Naive thymus-derived CD4-positive, alpha-beta T cell (primary cell): ENCODE measurements at regions of chr6 and their contacts with region 1.

Region 1: GRCh38 chr6:52284460-52285176 is at the start of gene MCM3:
- DNase-seq: peak; percentile 76 to 98 (median 97)
- ATAC-seq: peak; percentile 98
- H3K4me3 ChIP-seq: peak within 1 kb of the TSS; percentile 77
- H3K4me3 Mint-ChIP-seq: peak within 1 kb of the TSS in 4 of 10 donors; percentile 42 to 89 (median 58)
- H3K27ac ChIP-seq: peak within 1 kb of the TSS; percentile 74
- H3K27ac Mint-ChIP-seq: peak within 1 kb of the TSS in 6 of 9 donors; percentile 28 to 77 (median 30)
- H3K4me1 ChIP-seq: peaks cover 32 to 33% of the 10 kb centered on the region in 2 donors
- H3K4me1 Mint-ChIP-seq: peaks cover 22 to 58% (median 48%) of the 10 kb centered on the region in 7 donors
- H3K27me3 ChIP-seq: no peaks in the 10 kb centered on the region
- H3K27me3 Mint-ChIP-seq: no peaks in the 10 kb centered on the region
- total RNA-seq, gene MCM3: 20.3 to 157 (median 45.2) TPM

Region 2: GRCh38 chr6:52304983-52305390 is 20.4 kb after region 1 on chr6:
- CTCF ChIA-PET with region 1: interaction called, 46 read pairs
- POLR2A ChIA-PET with region 1: interaction called, 16 read pairs
- intact Hi-C with region 1: loop called (anchors 1 kb)
- DNase-seq: peak in 1 of 9 donors; percentile 5
- ATAC-seq: peak; percentile 62
- H3K4me3 ChIP-seq: peak overlapping the region; percentile 20
- H3K4me3 Mint-ChIP-seq: peak overlapping the region; percentile 38 to 84 (median 74)
- H3K27ac ChIP-seq: peak overlapping the region; percentile 64
- H3K27ac Mint-ChIP-seq: peak overlapping the region; percentile 68 to 98 (median 96)
- H3K4me1 ChIP-seq: peaks cover 53 to 69% of the 10 kb centered on the region in 2 donors
- H3K4me1 Mint-ChIP-seq: peaks cover 47 to 88% (median 78%) of the 10 kb centered on the region in 7 donors
- H3K27me3 ChIP-seq: no peaks in the 10 kb centered on the region
- H3K27me3 Mint-ChIP-seq: no peaks in the 10 kb centered on the region

Region 3: GRCh38 chr6:52377538-52378221 is 93.1 kb after region 1 on chr6:
- CTCF ChIA-PET with region 1: interaction called, 6 read pairs
- POLR2A ChIA-PET with region 1: interaction called, 15 read pairs
- intact Hi-C with region 1: no loop called
- DNase-seq: peak in 3 of 9 donors; percentile 34 to 50 (median 36)
- ATAC-seq: peak; percentile 29
- H3K4me3 ChIP-seq: no peak overlapping the region
- H3K4me3 Mint-ChIP-seq: peak overlapping the region; percentile 22 to 87 (median 63)
- H3K27ac ChIP-seq: peak overlapping the region; percentile 52
- H3K27ac Mint-ChIP-seq: peak overlapping the region; percentile 51 to 96 (median 87)
- H3K4me1 ChIP-seq: peaks cover 10 to 54% of the 10 kb centered on the region in 2 donors
- H3K4me1 Mint-ChIP-seq: peaks cover 50 to 86% (median 82%) of the 10 kb centered on the region in 7 donors
- H3K27me3 ChIP-seq: no peaks in the 10 kb centered on the region
- H3K27me3 Mint-ChIP-seq: no peaks in the 10 kb centered on the region

Region 4: GRCh38 chr6:52419809-52420670 is 135.4 kb after region 1 on chr6 and contains the start of gene EFHC1:
- CTCF ChIA-PET with region 1: interaction called, 45 read pairs
- POLR2A ChIA-PET with region 1: interaction called, 36 read pairs
- intact Hi-C with region 1: loop called (anchors 1 kb)
- DNase-seq: peak; percentile 95 to 98 (median 97)
- ATAC-seq: peak; percentile 97
- H3K4me3 ChIP-seq: peak within 1 kb of the TSS; percentile 73
- H3K4me3 Mint-ChIP-seq: no peak within 1 kb of the TSS
- H3K27ac ChIP-seq: peak within 1 kb of the TSS; percentile 72
- H3K27ac Mint-ChIP-seq: peak within 1 kb of the TSS in 1 of 9 donors; percentile 96
- H3K4me1 ChIP-seq: peaks cover 13 to 19% of the 10 kb centered on the region in 2 donors
- H3K4me1 Mint-ChIP-seq: peaks cover 10 to 31% (median 24%) of the 10 kb centered on the region in 7 donors
- H3K27me3 ChIP-seq: no peaks in the 10 kb centered on the region
- H3K27me3 Mint-ChIP-seq: peaks cover 0 to 5% (median 0%) of the 10 kb centered on the region in 5 donors
- total RNA-seq, gene EFHC1: 2.4 to 13.8 (median 6.0) TPM

Region 5: GRCh38 chr6:52491203-52492069 is 206.8 kb after region 1 on chr6:
- CTCF ChIA-PET with region 1: no interaction called
- POLR2A ChIA-PET with region 1: no interaction called
- intact Hi-C with region 1: no loop called
- DNase-seq: no peak
- ATAC-seq: no peak
- H3K4me3 ChIP-seq: no peak overlapping the region
- H3K4me3 Mint-ChIP-seq: no peak overlapping the region
- H3K27ac ChIP-seq: no peak overlapping the region
- H3K27ac Mint-ChIP-seq: no peak overlapping the region
- H3K4me1 ChIP-seq: no peaks in the 10 kb centered on the region
- H3K4me1 Mint-ChIP-seq: peaks cover 0 to 37% (median 0%) of the 10 kb centered on the region in 7 donors
- H3K27me3 ChIP-seq: no peaks in the 10 kb centered on the region
- H3K27me3 Mint-ChIP-seq: peaks cover 0 to 10% (median 0%) of the 10 kb centered on the region in 5 donors

Region 6: DNA sequence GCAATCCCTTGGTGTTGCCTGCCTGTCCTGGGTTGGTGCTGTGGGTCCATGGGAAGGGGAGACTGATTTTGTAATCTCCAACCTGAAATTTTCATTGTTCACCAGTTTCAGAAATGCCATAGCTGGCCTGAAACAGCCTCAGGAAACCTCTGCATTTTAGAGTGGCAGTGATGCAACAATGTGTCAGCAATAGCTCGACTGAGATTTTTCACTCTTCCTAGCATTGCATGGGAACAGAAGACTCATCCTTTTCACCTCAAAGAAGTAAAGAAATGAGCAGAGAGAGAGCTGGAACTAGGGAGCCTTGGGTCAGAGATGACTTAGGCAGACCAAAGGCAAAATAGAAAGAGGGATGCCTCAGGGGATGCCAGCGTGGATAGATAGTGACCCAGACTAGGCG is 362.6 kb after region 1 on chr6:
- CTCF ChIA-PET with region 1: no interaction called
- POLR2A ChIA-PET with region 1: interaction called, 5 read pairs
- intact Hi-C with region 1: loop called in 1 of 2 experiments (anchors 1 kb)
- DNase-seq: no peak
- ATAC-seq: no peak
- H3K4me3 ChIP-seq: no peak overlapping the region
- H3K4me3 Mint-ChIP-seq: no peak overlapping the region
- H3K27ac ChIP-seq: no peak overlapping the region
- H3K27ac Mint-ChIP-seq: no peak overlapping the region
- H3K4me1 ChIP-seq: no peaks in the 10 kb centered on the region
- H3K4me1 Mint-ChIP-seq: peaks cover 4 to 12% (median 8%) of the 10 kb centered on the region in 7 donors
- H3K27me3 ChIP-seq: no peaks in the 10 kb centered on the region
- H3K27me3 Mint-ChIP-seq: peaks cover 3 to 51% (median 8%) of the 10 kb centered on the region in 5 donors

Region 7: GRCh38 chr6:53300656-53301551 is 1016.3 kb after region 1 on chr6:
- CTCF ChIA-PET with region 1: no interaction called
- POLR2A ChIA-PET with region 1: no interaction called
- intact Hi-C with region 1: loop called in 1 of 2 experiments (anchors 1 kb)
- DNase-seq: no peak
- ATAC-seq: peak; percentile 48
- H3K4me3 ChIP-seq: no peak overlapping the region
- H3K4me3 Mint-ChIP-seq: peak overlapping the region; percentile 5 to 74 (median 50)
- H3K27ac ChIP-seq: no peak overlapping the region
- H3K27ac Mint-ChIP-seq: peak overlapping the region; percentile 33 to 92 (median 68)
- H3K4me1 ChIP-seq: peaks cover 35 to 52% of the 10 kb centered on the region in 2 donors
- H3K4me1 Mint-ChIP-seq: peaks cover 53 to 84% (median 78%) of the 10 kb centered on the region in 7 donors
- H3K27me3 ChIP-seq: no peaks in the 10 kb centered on the region
- H3K27me3 Mint-ChIP-seq: no peaks in the 10 kb centered on the region